ENCODE measurements at regions of chr18 and their contacts with region 1.

Region 1: GRCh38 chr18:31954349-31954748 is 11.4 kb upstream of the TRAPPC8 start:
- DNase-seq: no peak
- H3K4me3 ChIP-seq: no peak overlapping the region
- H3K27ac ChIP-seq: no peak overlapping the region
- H3K4me1 ChIP-seq: no peaks in the 10 kb centered on the region
- H3K27me3 ChIP-seq: no peaks in the 10 kb centered on the region
- CTCF ChIP-seq: no peak
- POLR2A ChIP-seq: no peak

Region 2: GRCh38 chr18:31741097-31741735 is 213.1 kb before region 1 on chr18:
- CTCF ChIA-PET with region 1: interaction called, 10 read pairs
- POLR2A ChIA-PET with region 1: no interaction called
- dilution Hi-C with region 1: no loop called
- intact Hi-C with region 1: loop called (anchors 1 kb)
- DNase-seq: peak; percentile 44
- H3K4me3 ChIP-seq: no peak overlapping the region
- H3K27ac ChIP-seq: no peak overlapping the region
- H3K4me1 ChIP-seq: no peaks in the 10 kb centered on the region
- H3K27me3 ChIP-seq: no peaks in the 10 kb centered on the region
- CTCF ChIP-seq: peak; percentile 60 to 66
- POLR2A ChIP-seq: no peak

Measured in endothelial cell of umbilical vein (primary cell).